ENCODE measurements at regions of chr14 and their contacts with region 1.

Region 1: GRCh38 chr14:67599698-67600561 is at the start of gene PIGH:
- DNase-seq: peak; percentile 95
- H3K4me3 Mint-ChIP-seq: peak within 1 kb of the TSS; percentile 84
- H3K27ac Mint-ChIP-seq: peak within 1 kb of the TSS; percentile 93
- H3K4me1 Mint-ChIP-seq: peaks cover 38% of the 10 kb centered on the region
- H3K27me3 Mint-ChIP-seq: no peaks in the 10 kb centered on the region
- total RNA-seq, gene PIGH: 11.9 to 12.4 TPM

Region 2: DNA sequence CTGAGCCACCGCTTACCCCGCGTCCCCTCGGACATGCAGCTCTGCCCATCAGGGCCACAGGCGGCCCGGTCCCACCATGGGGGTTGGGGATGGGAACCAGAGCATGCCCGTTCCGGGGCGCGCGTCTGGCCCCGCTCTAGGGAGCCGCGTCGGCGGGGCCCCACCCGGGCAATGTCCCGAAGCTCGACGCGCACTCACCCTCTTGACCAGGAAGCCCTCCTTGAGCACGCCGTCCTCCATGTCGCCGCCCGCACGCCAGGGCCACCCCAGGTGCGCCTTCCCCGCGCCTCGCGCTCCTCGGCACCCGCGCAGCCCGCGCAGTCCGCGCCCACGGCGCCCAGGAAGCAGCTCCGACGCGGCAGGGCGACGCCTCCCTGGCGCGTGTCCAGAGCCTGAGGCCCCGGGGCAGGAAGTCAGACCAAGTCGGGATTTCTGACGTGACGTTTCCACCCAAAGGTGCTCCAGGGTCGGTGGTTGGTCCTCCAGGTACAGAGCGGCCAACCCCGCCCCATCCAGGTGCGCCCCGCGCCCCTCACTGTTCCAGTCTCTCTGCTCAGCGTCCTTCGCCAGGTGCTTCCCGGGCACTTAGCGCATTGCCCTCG is 188.0 kb before region 1 on chr14 and contains the start of gene PLEK2:
- CTCF ChIA-PET with region 1: no interaction called
- intact Hi-C with region 1: no loop called
- DNase-seq: peak; percentile 73
- H3K4me3 Mint-ChIP-seq: peak within 1 kb of the TSS; percentile 60
- H3K27ac Mint-ChIP-seq: no peak within 1 kb of the TSS
- H3K4me1 Mint-ChIP-seq: peaks cover 16% of the 10 kb centered on the region
- H3K27me3 Mint-ChIP-seq: no peaks in the 10 kb centered on the region
- total RNA-seq, gene PLEK2: 2.2 to 3.2 TPM

Region 3: GRCh38 chr14:67619446-67620216 is 19.7 kb after region 1 on chr14 and contains the start of gene ARG2:
- CTCF ChIA-PET with region 1: interaction called, 14 read pairs
- intact Hi-C with region 1: loop called (anchors 1 kb)
- DNase-seq: peak; percentile 98
- H3K4me3 Mint-ChIP-seq: peak within 1 kb of the TSS; percentile 87
- H3K27ac Mint-ChIP-seq: peak within 1 kb of the TSS; percentile 69
- H3K4me1 Mint-ChIP-seq: peaks cover 42% of the 10 kb centered on the region
- H3K27me3 Mint-ChIP-seq: peaks cover 4% of the 10 kb centered on the region
- total RNA-seq, gene ARG2: 20.3 to 20.8 TPM

Region 4: GRCh38 chr14:67666750-67667449 is 67.0 kb after region 1 on chr14:
- CTCF ChIA-PET with region 1: interaction called, 12 read pairs
- intact Hi-C with region 1: loop called (anchors 1 kb)
- DNase-seq: peak; percentile 55
- H3K4me3 Mint-ChIP-seq: no peak overlapping the region
- H3K27ac Mint-ChIP-seq: no peak overlapping the region
- H3K4me1 Mint-ChIP-seq: peaks cover 50% of the 10 kb centered on the region
- H3K27me3 Mint-ChIP-seq: no peaks in the 10 kb centered on the region

Region 5: GRCh38 chr14:67674481-67675169 is 74.7 kb after region 1 on chr14 and contains the start of gene VTI1B:
- CTCF ChIA-PET with region 1: interaction called, 7 read pairs
- intact Hi-C with region 1: loop called (anchors 2 kb)
- DNase-seq: peak; percentile 68
- H3K4me3 Mint-ChIP-seq: peak within 1 kb of the TSS; percentile 80
- H3K27ac Mint-ChIP-seq: peak within 1 kb of the TSS; percentile 66
- H3K4me1 Mint-ChIP-seq: peaks cover 34% of the 10 kb centered on the region
- H3K27me3 Mint-ChIP-seq: no peaks in the 10 kb centered on the region
- total RNA-seq, gene VTI1B: 74.2 to 78.3 TPM

Region 6: DNA sequence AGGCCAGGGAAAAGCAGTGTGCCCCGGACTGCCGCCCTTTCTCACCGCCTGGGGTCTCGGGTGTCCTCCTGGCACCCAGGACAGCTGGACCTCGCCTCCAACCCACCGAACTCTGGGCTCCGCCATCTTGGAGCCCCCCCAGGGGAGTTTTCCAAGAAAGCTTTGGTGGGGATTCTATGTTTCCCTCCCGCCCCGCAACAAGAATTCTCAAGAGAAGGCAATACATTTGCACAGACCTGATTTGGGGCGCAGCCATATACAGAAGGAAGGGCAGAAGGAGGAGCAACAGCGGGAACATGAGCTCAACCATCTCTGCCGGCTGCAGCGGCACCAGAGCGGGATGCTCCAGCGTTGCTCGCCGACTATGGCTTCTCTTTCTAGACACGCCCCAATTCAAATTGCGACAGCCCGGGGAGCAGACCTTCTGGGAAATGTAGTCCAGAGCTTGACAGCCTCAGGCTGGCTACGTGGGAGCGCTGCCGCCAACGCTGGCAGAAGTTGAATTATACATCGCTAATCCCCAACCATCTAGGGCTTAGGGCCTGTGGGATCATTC is 95.5 kb after region 1 on chr14 and contains the start of gene RDH11:
- CTCF ChIA-PET with region 1: interaction called, 6 read pairs
- intact Hi-C with region 1: loop called (anchors 1 kb)
- DNase-seq: peak; percentile 91
- H3K4me3 Mint-ChIP-seq: peak within 1 kb of the TSS; percentile 81
- H3K27ac Mint-ChIP-seq: peak within 1 kb of the TSS; percentile 91
- H3K4me1 Mint-ChIP-seq: peaks cover 22% of the 10 kb centered on the region
- H3K27me3 Mint-ChIP-seq: no peaks in the 10 kb centered on the region
- total RNA-seq, gene RDH11: 58.5 to 64.3 TPM

Region 7: DNA sequence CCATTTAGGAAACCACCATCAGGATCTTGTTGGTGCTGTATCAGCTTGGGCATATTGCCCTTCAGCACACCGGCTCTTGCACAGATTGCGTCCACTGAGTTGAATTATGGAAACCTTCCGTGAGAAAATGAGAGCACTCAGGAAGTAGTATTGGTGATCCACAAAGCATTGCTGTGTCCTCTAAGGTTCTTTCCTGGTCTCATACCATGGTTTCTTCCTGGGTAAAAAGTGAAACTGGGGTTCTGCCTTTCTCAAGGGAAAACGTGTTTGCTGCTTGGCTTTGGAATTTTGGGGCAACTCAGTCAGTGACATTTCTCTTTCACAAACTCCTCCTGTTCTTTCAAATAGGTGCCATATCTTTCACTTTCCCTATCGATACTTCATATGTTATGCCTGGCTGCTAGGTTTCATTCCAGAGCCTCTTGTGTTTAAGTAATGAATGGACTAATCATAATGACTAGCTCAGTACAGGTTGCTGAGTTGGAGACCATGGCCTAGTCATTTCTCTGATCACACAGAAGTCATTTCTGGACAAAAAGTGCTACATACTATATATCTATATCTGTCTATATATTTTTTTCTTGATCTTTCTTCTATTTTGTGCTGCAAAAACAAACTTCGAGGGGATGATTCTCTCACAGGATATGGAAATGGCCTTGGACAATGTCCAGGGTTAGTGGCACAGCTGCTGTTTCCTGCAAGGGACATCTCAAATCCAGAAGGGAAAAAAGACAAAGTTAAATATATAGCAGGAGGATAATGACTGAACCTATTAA is 769.5 kb after region 1 on chr14:
- CTCF ChIA-PET with region 1: no interaction called
- intact Hi-C with region 1: loop called (anchors 5 kb)
- DNase-seq: peak; percentile 22
- H3K4me3 Mint-ChIP-seq: no peak overlapping the region
- H3K27ac Mint-ChIP-seq: no peak overlapping the region
- H3K4me1 Mint-ChIP-seq: peaks cover 40% of the 10 kb centered on the region
- H3K27me3 Mint-ChIP-seq: no peaks in the 10 kb centered on the region